ENCODE measurements at regions of chr6 and their contacts with region 1.

Region 1: GRCh38 chr6:10411971-10412745 is 2.7 kb downstream of the TFAP2A start:
- DNase-seq: peak; percentile 94
- H3K4me3 Mint-ChIP-seq: peak overlapping the region; percentile 94
- H3K27ac Mint-ChIP-seq: peak overlapping the region; percentile 99
- H3K4me1 Mint-ChIP-seq: peaks cover 12% of the 10 kb centered on the region
- H3K27me3 Mint-ChIP-seq: no peaks in the 10 kb centered on the region
- CTCF ChIP-seq: no peak

Region 2: DNA sequence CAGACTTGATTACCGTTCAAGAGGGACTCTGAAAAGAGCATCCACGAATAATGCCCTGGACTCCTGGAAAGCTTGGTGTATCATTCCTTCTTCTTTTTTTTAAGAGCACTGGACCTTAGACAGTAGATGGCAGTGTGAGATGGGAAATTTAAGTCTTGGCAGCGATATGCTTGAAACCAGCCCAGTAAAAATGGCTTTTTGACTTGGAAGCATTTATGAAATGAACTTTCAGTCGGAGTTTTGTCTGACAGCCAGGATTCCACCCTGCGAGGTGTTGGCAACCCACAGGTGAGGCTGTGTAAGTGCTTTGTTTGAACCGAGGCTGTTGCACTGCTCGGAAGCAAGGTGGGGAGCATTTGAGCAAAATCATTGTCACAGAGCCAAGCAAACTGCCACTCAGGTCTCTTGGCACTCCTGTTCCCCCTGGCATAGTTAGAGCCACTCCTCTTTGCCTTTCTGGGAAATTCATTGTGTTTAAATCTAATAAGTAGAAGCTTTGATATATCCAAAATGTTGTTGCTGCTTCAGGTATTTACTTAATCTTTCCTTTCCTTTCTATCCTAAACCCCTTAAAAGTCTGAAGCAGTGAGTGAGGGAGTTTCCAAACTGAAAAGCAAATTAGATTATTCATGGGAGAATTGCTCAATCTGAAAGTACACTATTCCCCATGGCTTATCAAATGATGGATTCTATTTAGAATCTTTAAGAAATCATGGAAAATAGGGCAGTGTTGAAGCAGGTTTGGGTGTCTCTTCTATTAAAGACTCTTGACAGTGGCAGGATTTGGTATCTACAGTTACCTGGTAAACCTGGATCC is 1704.0 kb before region 1 on chr6:
- CTCF ChIA-PET with region 1: interaction called, 6 read pairs
- POLR2A ChIA-PET with region 1: interaction called, 13 read pairs
- intact Hi-C with region 1: no loop called
- DNase-seq: peak; percentile 75
- H3K4me3 Mint-ChIP-seq: peak overlapping the region; percentile 63
- H3K27ac Mint-ChIP-seq: peak overlapping the region; percentile 47
- H3K4me1 Mint-ChIP-seq: peaks cover 9% of the 10 kb centered on the region
- H3K27me3 Mint-ChIP-seq: no peaks in the 10 kb centered on the region
- CTCF ChIP-seq: peak; percentile 48

Region 3: DNA sequence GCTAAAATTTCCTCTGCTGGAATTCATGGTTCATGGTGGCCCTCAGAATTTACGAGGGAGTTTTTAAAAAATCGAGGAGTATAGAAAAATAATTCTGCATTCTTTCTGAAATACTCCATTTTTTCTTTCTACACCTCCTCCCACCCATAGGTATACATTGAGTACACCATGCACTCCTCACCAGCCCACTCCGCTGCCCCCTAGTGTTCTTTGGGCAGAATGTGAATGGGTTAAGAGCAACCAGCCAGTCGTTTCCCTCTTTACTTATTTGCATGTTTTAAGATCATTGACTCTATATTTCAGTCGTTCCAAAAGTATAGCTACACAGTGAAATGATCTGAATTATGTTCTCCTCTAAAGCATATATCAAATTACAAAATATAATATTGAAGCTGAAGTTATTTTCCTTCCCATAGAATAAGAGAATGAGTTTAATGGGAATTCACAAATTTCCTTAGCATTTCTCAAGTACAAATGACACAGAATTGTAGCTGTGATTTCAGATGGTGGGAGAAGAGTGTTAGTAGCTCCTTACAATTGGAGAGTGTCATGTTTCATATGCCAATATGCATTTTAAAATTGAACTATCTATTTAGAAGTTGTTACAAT is 999.1 kb before region 1 on chr6:
- CTCF ChIA-PET with region 1: no interaction called
- POLR2A ChIA-PET with region 1: interaction called, 3 read pairs
- intact Hi-C with region 1: loop called (anchors 10 kb)
- DNase-seq: peak; percentile 69
- H3K4me3 Mint-ChIP-seq: no peak overlapping the region
- H3K27ac Mint-ChIP-seq: no peak overlapping the region
- H3K4me1 Mint-ChIP-seq: no peaks in the 10 kb centered on the region
- H3K27me3 Mint-ChIP-seq: no peaks in the 10 kb centered on the region
- CTCF ChIP-seq: peak; percentile 36

Region 4: GRCh38 chr6:9851541-9852380 is 560.4 kb before region 1 on chr6:
- CTCF ChIA-PET with region 1: no interaction called
- POLR2A ChIA-PET with region 1: no interaction called
- intact Hi-C with region 1: loop called (anchors 5 kb)
- DNase-seq: peak; percentile 85
- H3K4me3 Mint-ChIP-seq: no peak overlapping the region
- H3K27ac Mint-ChIP-seq: no peak overlapping the region
- H3K4me1 Mint-ChIP-seq: no peaks in the 10 kb centered on the region
- H3K27me3 Mint-ChIP-seq: no peaks in the 10 kb centered on the region
- CTCF ChIP-seq: peak; percentile 41

Region 5: DNA sequence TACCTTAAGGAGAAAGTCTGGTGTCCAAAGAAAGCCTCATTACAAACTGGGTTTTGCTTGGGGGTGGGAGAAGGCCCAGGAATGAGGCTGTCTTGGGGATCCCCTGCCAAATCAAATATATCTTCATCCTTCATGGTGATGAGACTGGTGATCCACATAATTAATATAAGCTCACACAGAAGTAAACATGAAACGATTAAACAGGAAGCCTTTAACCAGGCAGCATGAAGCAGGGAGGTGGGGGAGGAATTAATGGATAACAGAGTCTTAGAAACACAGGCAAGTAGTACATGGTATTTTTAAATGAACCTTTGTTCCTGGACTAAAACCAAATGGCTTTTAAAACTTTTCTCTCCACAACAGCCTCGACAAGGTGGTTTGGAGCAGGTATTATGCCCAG is 434.7 kb before region 1 on chr6:
- CTCF ChIA-PET with region 1: no interaction called
- POLR2A ChIA-PET with region 1: no interaction called
- intact Hi-C with region 1: no loop called
- DNase-seq: no peak
- H3K4me3 Mint-ChIP-seq: no peak overlapping the region
- H3K27ac Mint-ChIP-seq: no peak overlapping the region
- H3K4me1 Mint-ChIP-seq: peaks cover 9% of the 10 kb centered on the region
- H3K27me3 Mint-ChIP-seq: no peaks in the 10 kb centered on the region
- CTCF ChIP-seq: no peak

Region 6: GRCh38 chr6:10163200-10163962 is 248.8 kb before region 1 on chr6:
- CTCF ChIA-PET with region 1: no interaction called
- POLR2A ChIA-PET with region 1: interaction called, 27 read pairs
- intact Hi-C with region 1: no loop called
- DNase-seq: peak; percentile 89
- H3K4me3 Mint-ChIP-seq: peak overlapping the region; percentile 59
- H3K27ac Mint-ChIP-seq: peak overlapping the region; percentile 76
- H3K4me1 Mint-ChIP-seq: peaks cover 18% of the 10 kb centered on the region
- H3K27me3 Mint-ChIP-seq: no peaks in the 10 kb centered on the region
- CTCF ChIP-seq: no peak

Region 7: DNA sequence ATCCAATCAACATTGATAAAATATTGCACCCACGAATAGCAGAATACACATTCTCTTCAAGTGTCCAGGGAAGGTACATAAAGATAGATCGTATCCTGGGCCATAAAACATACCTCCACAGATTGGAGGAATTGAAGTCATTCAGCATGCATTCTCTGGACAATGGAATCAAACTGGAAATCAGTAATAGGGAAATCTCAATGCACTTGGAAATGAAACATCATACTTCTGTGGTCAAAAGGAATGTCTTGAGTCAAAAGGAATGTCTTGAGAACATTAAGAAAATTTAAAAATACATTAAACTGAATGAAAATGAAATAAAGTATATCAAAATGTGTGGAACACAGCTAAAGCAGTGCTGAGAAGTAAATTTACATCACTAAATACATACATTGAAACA is 136.1 kb before region 1 on chr6:
- CTCF ChIA-PET with region 1: no interaction called
- POLR2A ChIA-PET with region 1: no interaction called
- intact Hi-C with region 1: no loop called
- DNase-seq: peak; percentile 8
- H3K4me3 Mint-ChIP-seq: no peak overlapping the region
- H3K27ac Mint-ChIP-seq: peak overlapping the region; percentile 59
- H3K4me1 Mint-ChIP-seq: peaks cover 21% of the 10 kb centered on the region
- H3K27me3 Mint-ChIP-seq: no peaks in the 10 kb centered on the region
- CTCF ChIP-seq: no peak

Region 8: GRCh38 chr6:10429638-10430427 is 17.7 kb after region 1 on chr6:
- CTCF ChIA-PET with region 1: interaction called, 50 read pairs
- POLR2A ChIA-PET with region 1: interaction called, 763 read pairs
- intact Hi-C with region 1: loop called (anchors 2 kb)
- DNase-seq: peak; percentile 88
- H3K4me3 Mint-ChIP-seq: no peak overlapping the region
- H3K27ac Mint-ChIP-seq: peak overlapping the region; percentile 92
- H3K4me1 Mint-ChIP-seq: peaks cover 40% of the 10 kb centered on the region
- H3K27me3 Mint-ChIP-seq: no peaks in the 10 kb centered on the region
- CTCF ChIP-seq: peak; percentile 67

Measured in MCF 10A (cell line).